IMR-90 (cell line): ENCODE measurements at regions of chr7 and their contacts with region 1.

Region 1: DNA sequence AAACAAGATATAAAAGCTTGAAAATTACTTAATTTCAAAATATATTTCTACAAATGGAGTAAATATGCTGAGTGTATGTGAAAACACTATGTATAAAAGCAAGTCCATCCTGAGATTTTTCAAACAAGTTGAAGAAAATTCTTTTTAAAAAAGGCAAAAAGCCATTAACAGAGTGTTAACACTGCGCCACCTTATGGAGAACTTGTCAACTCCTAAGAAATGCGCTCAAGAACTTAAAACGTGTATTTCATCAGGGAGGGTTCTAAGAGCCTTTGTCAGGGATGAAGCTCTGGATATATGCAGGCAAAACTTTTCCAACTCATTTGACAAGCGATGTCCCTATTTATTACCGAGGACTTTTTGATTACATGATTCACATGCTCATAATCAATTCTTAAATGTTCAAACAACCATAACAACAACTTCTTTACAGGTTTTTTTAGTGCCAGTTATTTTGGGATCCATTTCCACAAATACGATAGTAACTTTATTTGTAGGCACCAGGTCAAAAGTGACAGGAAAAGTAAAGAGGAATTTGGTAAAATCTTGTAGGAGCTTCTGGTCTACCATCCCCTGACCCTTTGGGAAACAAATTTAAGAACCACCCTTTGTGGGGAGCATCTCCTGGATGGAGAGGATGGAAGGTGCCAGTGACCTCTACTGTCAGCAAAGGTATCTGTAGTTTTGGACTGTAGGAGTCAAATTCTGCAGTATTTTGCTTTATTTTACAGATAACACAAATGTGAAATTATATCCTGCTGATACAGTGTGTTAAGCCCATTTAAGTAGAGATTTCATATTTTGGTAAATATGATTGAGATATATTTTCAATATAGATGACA is 23.2 kb downstream of the CALCR start:
- DNase-seq: peak; percentile 56
- ATAC-seq: peak; percentile 54; the same call in 1 of the 2 replicates
- H3K4me3 ChIP-seq: no peak overlapping the region
- H3K27ac ChIP-seq: no peak overlapping the region
- H3K4me1 ChIP-seq: no peaks in the 10 kb centered on the region
- H3K27me3 ChIP-seq: peaks cover 2% of the 10 kb centered on the region; the same call in 1 of the 2 replicates
- CTCF ChIP-seq: peak; percentile 60
- POLR2A ChIP-seq: no peak
- RAD21 ChIP-seq: peak; percentile 52

Region 2: GRCh38 chr7:93374345-93374940 is 176.8 kb before region 1 on chr7:
- CTCF ChIA-PET with region 1: no interaction called
- POLR2A ChIA-PET with region 1: no interaction called
- dilution Hi-C with region 1: no loop called
- in situ Hi-C with region 1: no loop called
- intact Hi-C with region 1: loop called (anchors 2 kb)
- DNase-seq: peak; percentile 39
- ATAC-seq: peak; percentile 98
- H3K4me3 ChIP-seq: no peak overlapping the region
- H3K27ac ChIP-seq: no peak overlapping the region
- H3K4me1 ChIP-seq: no peaks in the 10 kb centered on the region
- H3K27me3 ChIP-seq: peaks cover 8% of the 10 kb centered on the region
- CTCF ChIP-seq: peak; percentile 81
- POLR2A ChIP-seq: no peak
- RAD21 ChIP-seq: peak; percentile 74

Region 3: DNA sequence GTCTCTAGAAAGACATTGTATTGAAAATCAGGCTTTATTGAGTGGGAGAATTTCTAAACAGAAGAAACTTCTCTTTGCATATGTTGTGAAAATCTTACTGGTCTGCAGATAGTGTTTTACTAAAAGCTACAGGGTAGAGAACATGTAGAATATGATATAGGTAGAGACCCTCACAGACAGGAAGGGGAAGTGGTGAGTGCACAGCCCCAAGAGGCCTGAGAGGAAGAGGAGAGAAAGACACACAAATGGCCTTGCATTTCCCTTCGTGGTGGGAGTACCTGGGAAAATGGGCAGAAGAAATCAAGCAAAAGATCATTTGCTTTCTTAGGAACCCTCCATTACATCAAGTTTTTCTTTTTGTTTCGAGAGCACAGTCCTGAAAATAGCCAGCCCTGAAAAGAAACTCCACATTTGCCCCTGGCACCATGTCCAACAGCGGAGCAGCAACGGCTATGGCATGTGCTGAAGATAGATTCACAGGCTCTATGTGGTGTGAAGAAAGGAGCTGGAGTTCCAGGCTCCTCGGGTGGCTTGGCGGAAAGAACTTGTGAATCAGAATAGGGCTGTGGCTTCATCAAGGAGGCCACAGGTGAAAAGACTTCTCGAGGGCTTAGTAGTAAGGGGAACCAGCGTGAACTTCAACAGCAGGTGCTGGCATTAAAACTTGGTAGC is 120.2 kb before region 1 on chr7:
- CTCF ChIA-PET with region 1: no interaction called
- POLR2A ChIA-PET with region 1: no interaction called
- dilution Hi-C with region 1: no loop called
- in situ Hi-C with region 1: no loop called
- intact Hi-C with region 1: no loop called
- DNase-seq: no peak
- ATAC-seq: no peak
- H3K4me3 ChIP-seq: no peak overlapping the region
- H3K27ac ChIP-seq: no peak overlapping the region
- H3K4me1 ChIP-seq: no peaks in the 10 kb centered on the region
- H3K27me3 ChIP-seq: no peaks in the 10 kb centered on the region; the same call in 1 of the 2 replicates
- CTCF ChIP-seq: no peak
- POLR2A ChIP-seq: no peak
- RAD21 ChIP-seq: no peak